Natural killer cell (primary cell): ENCODE measurements at regions of chr2 and their contacts with region 1.

Region 1: DNA sequence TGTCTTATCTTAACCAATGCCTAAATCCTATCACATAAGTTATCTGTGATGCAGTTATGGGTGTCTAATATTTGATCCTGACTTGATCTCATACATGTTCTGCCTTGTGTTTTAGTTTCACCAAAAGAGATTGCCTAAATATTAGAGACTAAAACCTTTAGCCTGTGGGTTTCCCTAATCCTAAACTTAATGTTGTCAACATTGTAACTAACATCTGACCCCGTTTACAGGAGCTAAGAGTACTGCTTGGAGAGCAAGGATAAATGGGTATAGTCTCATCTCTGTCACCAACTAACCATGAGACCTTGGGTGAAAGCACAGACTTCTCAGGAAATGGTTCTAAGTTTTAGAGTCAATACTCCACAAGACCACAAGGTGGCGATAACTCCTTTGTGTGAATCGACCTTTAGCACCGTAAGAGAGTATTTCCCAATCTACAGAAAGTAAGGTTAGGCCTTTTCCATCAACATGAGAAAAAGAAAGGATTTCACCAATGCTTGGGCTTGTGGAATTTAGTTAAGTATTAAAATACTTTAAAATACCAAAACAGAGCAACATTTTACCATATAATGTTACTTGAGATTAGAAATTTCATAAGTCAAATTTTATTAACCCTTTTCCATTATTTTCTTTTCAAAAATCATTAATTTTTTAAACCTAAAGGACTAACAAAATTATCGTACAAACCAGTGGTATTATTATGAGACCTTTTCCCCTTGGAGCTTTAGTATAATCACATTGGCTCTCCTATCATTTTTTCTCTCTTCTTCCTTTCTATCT is 60.5 kb downstream of the G6PC2 start:
- DNase-seq: peak in 1 of 2 donors; percentile 82
- ATAC-seq: peak; percentile 90 to 99 (median 96)
- H3K4me3 ChIP-seq: no peak overlapping the region
- H3K4me3 Mint-ChIP-seq: no peak overlapping the region
- H3K27ac ChIP-seq: no peak overlapping the region
- H3K27ac Mint-ChIP-seq: peak overlapping the region in 1 of 2 donors; percentile 38
- H3K4me1 ChIP-seq: no peaks in the 10 kb centered on the region
- H3K4me1 Mint-ChIP-seq: peaks cover 9 to 16% of the 10 kb centered on the region in 2 donors
- H3K27me3 ChIP-seq: no peaks in the 10 kb centered on the region
- H3K27me3 Mint-ChIP-seq: peaks cover 6 to 9% of the 10 kb centered on the region in 2 donors
- CTCF ChIP-seq: peak; percentile 86

Region 2: GRCh38 chr2:168622559-168622958 is 339.1 kb before region 1 on chr2:
- intact Hi-C with region 1: no loop called
- DNase-seq: no peak
- ATAC-seq: no peak
- H3K4me3 ChIP-seq: no peak overlapping the region
- H3K4me3 Mint-ChIP-seq: no peak overlapping the region
- H3K27ac ChIP-seq: no peak overlapping the region
- H3K27ac Mint-ChIP-seq: no peak overlapping the region
- H3K4me1 ChIP-seq: no peaks in the 10 kb centered on the region
- H3K4me1 Mint-ChIP-seq: peaks cover 19 to 26% of the 10 kb centered on the region in 2 donors
- H3K27me3 ChIP-seq: no peaks in the 10 kb centered on the region
- H3K27me3 Mint-ChIP-seq: no peaks in the 10 kb centered on the region
- CTCF ChIP-seq: no peak

Region 3: DNA sequence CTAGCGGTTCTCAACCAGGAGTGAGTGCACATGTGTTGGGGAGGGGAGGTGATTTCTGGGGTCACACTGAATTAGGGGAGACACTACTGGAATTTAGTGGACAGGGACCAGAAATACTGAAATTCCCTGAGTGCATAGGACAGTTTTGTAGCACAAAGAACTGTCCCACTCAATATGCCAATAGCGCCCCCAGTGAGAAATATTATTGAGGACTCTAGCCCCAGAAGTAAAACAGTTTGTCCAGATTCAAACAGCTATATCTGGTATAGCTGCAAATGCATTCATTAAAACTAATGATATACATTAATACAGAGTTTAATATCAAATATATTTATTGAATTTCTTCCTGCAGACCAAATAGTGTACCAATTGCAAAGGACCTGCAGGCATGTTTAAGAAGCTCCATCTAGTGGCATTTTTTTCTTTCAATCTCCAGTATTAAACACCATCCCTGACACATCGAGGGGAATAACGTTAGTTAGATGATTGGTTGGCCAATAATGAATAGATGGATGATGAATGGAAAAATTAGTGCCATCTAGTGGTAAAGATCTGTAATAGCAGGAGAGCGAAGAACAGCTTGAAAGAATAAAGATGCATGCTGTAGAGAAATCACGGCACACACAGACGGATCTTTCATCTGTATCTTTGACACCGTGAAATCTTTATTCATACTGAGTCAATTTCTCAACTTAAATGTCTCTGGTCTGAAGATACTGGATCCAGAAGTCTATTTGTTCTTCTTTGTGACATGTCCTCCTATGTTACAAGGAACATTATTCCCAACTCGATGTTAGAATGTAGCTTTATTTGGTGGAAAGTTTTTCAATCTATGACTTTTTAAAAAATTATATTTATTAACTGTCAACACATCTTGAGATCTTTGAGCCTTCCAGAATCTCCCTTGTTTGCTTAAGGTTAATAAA is 170.2 kb after region 1 on chr2:
- intact Hi-C with region 1: loop called (anchors 2 kb)
- DNase-seq: peak in 1 of 2 donors; percentile 74
- ATAC-seq: peak; percentile 73 to 97 (median 97)
- H3K4me3 ChIP-seq: no peak overlapping the region
- H3K4me3 Mint-ChIP-seq: no peak overlapping the region
- H3K27ac ChIP-seq: no peak overlapping the region
- H3K27ac Mint-ChIP-seq: no peak overlapping the region
- H3K4me1 ChIP-seq: no peaks in the 10 kb centered on the region
- H3K4me1 Mint-ChIP-seq: no peaks in the 10 kb centered on the region
- H3K27me3 ChIP-seq: no peaks in the 10 kb centered on the region
- H3K27me3 Mint-ChIP-seq: no peaks in the 10 kb centered on the region
- CTCF ChIP-seq: peak; percentile 95

Region 4: GRCh38 chr2:169141713-169142352 is 180.2 kb after region 1 on chr2:
- intact Hi-C with region 1: loop called (anchors 1 kb)
- DNase-seq: peak; percentile 40 to 81
- ATAC-seq: peak; percentile 50 to 77 (median 76)
- H3K4me3 ChIP-seq: no peak overlapping the region
- H3K4me3 Mint-ChIP-seq: no peak overlapping the region
- H3K27ac ChIP-seq: no peak overlapping the region
- H3K27ac Mint-ChIP-seq: no peak overlapping the region
- H3K4me1 ChIP-seq: no peaks in the 10 kb centered on the region
- H3K4me1 Mint-ChIP-seq: no peaks in the 10 kb centered on the region
- H3K27me3 ChIP-seq: no peaks in the 10 kb centered on the region
- H3K27me3 Mint-ChIP-seq: no peaks in the 10 kb centered on the region
- CTCF ChIP-seq: peak; percentile 94